ENCODE measurements at regions of chr2 and their contacts with region 1.

Region 1: DNA sequence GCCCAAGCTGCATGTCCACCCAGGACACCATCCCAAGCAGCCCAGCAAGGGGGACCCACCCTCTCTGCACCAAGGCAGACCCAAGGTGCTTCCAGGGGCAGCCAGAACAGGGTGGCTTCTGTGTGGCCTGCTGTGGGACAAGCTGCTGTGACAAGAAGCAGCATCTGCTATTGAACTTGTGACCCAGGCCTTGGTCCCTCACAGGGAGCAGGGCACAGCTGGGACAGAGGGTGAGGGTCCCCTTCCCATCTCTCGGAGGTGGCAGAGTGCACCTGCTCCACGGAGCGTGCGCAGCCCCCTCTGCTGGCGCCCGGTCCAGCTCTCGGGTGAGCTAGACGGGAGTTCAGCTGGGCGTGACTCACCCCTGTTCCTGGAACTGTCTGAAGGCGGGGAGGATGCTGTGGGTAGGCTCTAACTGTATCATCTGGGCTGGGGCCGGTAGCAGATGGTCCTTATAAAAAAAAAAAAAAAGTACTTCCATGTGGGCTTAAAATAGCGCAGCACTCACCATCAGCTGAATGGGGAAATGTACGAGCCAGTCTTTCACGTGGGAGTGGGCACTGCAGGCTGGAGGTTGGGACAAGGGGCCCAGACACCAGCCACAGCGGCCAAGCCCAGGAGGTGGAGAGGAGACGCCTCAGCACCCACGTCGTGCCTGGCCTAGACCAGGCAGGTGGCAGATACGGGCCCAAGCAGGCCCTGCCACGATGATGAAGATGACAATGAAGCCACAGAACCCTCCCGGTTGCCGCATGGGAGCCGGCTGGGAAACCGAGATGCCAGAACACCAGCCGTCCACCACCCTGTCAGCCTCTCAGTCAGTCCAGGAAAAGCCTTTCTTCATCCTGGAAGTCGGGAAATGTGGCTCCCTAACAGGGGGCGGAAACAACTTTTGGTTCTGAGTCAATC is 136.8 kb upstream of the ID2 start:
- DNase-seq: peak; percentile 97
- H3K4me3 Mint-ChIP-seq: peak overlapping the region; percentile 10
- H3K27ac Mint-ChIP-seq: peak overlapping the region; percentile 97
- H3K4me1 Mint-ChIP-seq: peaks cover 67% of the 10 kb centered on the region
- H3K27me3 Mint-ChIP-seq: no peaks in the 10 kb centered on the region

Region 2: GRCh38 chr2:7567646-7568045 is 977.4 kb before region 1 on chr2:
- CTCF ChIA-PET with region 1: no interaction called
- intact Hi-C with region 1: loop called (anchors 5 kb)
- DNase-seq: peak; percentile 82
- H3K4me3 Mint-ChIP-seq: peak overlapping the region; percentile 36
- H3K27ac Mint-ChIP-seq: peak overlapping the region; percentile 82
- H3K4me1 Mint-ChIP-seq: peaks cover 58% of the 10 kb centered on the region
- H3K27me3 Mint-ChIP-seq: no peaks in the 10 kb centered on the region

Region 3: GRCh38 chr2:7984693-7985353 is 560.2 kb before region 1 on chr2:
- CTCF ChIA-PET with region 1: no interaction called
- intact Hi-C with region 1: loop called (anchors 5 kb)
- DNase-seq: peak; percentile 22
- H3K4me3 Mint-ChIP-seq: peak overlapping the region; percentile 8
- H3K27ac Mint-ChIP-seq: peak overlapping the region; percentile 62
- H3K4me1 Mint-ChIP-seq: peaks cover 20% of the 10 kb centered on the region
- H3K27me3 Mint-ChIP-seq: peaks cover 4% of the 10 kb centered on the region

Region 4: DNA sequence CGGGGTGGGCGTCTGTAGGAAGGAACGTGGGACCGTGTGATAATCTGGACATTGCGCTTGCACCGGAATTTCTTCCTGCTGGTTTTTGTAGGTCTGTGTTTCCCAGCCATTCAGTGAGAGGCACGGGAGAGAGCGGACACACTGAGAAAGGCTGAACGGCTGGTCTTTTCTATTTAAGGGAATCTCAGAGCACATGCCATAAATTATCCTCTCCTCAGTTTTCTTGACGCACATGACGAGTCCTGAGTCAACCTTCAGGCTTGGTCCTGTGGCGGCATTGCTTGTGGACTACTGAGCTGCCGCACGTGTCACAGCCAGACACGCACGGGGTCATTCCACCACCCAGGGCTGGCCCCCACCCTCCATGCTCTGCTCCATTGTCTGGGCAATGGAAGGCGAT is 382.5 kb before region 1 on chr2:
- CTCF ChIA-PET with region 1: no interaction called
- intact Hi-C with region 1: no loop called
- DNase-seq: no peak
- H3K4me3 Mint-ChIP-seq: no peak overlapping the region
- H3K27ac Mint-ChIP-seq: no peak overlapping the region
- H3K4me1 Mint-ChIP-seq: no peaks in the 10 kb centered on the region
- H3K27me3 Mint-ChIP-seq: no peaks in the 10 kb centered on the region

Region 5: GRCh38 chr2:8337321-8337720 is 207.7 kb before region 1 on chr2:
- CTCF ChIA-PET with region 1: no interaction called
- intact Hi-C with region 1: loop called (anchors 2 kb)
- DNase-seq: peak; percentile 56
- H3K4me3 Mint-ChIP-seq: no peak overlapping the region
- H3K27ac Mint-ChIP-seq: peak overlapping the region; percentile 14
- H3K4me1 Mint-ChIP-seq: peaks cover 15% of the 10 kb centered on the region
- H3K27me3 Mint-ChIP-seq: no peaks in the 10 kb centered on the region

Region 6: GRCh38 chr2:8514796-8515758 is 30.0 kb before region 1 on chr2:
- CTCF ChIA-PET with region 1: interaction called, 23 read pairs
- intact Hi-C with region 1: loop called (anchors 1 kb)
- DNase-seq: peak; percentile 84
- H3K4me3 Mint-ChIP-seq: peak overlapping the region; percentile 42
- H3K27ac Mint-ChIP-seq: peak overlapping the region; percentile 96
- H3K4me1 Mint-ChIP-seq: peaks cover 46% of the 10 kb centered on the region
- H3K27me3 Mint-ChIP-seq: no peaks in the 10 kb centered on the region

Region 7: DNA sequence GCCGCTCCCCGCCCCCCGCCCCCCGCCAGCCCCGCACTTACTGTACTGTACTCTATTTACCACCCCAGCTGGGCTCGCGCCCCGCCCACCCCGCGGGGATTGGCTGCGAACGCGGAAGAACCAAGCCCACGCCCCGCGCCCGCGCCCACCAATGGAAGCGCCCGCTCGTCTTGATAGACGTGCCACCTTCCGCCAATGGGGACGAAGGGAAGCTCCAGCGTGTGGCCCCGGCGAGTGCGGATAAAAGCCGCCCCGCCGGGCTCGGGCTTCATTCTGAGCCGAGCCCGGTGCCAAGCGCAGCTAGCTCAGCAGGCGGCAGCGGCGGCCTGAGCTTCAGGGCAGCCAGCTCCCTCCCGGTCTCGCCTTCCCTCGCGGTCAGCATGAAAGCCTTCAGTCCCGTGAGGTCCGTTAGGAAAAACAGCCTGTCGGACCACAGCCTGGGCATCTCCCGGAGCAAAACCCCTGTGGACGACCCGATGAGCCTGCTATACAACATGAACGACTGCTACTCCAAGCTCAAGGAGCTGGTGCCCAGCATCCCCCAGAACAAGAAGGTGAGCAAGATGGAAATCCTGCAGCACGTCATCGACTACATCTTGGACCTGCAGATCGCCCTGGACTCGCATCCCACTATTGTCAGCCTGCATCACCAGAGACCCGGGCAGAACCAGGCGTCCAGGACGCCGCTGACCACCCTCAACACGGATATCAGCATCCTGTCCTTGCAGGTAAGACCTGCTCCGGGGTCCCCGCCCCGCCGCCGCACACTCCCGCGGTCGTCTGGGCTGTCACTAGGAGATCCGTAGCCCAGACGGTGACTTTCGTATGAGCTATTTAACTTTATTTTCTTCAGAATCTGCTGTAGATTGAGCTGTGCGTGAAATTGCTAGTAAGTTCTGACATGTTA is 137.0 kb after region 1 on chr2 and contains the start of gene ID2:
- CTCF ChIA-PET with region 1: interaction called, 15 read pairs
- intact Hi-C with region 1: loop called (anchors 1 kb)
- DNase-seq: peak; percentile 98
- H3K4me3 Mint-ChIP-seq: peak within 1 kb of the TSS; percentile 96
- H3K27ac Mint-ChIP-seq: peak within 1 kb of the TSS; percentile 91
- H3K4me1 Mint-ChIP-seq: peaks cover 31% of the 10 kb centered on the region
- H3K27me3 Mint-ChIP-seq: peaks cover 18% of the 10 kb centered on the region
- total RNA-seq, gene ID2: 73.9 to 81.9 TPM

Region 8: DNA sequence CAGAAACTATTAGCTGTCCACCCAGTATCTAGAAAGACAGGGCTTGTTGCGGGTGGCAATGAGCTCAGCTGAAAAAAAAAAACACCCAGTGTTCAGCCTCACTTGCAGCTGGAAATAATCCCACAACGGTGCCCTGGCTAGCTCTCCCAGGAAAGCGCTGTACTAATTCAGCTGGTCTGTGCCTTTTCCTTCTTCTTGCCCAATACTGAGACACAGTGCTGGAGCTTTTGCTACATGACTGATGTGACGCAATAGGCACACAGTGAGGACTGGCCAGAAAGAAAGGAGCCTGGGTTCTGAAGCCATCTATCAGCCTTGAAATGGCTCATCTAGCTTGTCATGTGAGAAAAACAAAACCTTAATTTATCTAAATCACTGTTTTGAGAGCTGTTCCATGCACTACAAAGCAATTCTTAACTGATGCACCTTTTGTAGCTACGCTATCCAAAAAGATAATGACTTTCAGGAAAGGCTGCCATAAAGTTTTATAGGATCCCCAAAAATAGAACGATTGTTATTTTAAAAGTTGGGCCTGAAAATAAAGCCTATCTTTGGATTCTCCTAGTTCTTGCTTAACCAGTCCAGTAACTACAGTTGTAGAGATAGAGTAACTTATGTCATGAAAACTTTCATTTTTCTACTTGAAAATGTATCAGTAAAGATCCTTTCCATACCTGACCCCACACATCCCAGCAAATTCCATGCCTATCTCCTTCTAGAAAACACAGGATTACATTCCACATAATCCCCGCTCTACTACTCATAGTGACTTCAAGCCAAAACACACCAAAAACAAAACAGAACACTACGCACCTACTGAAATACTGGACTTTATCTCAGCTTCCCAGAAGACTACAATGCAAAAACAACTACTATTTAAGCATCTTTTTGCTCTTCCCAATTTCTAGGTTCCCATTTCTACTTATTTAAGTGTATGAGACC is 276.5 kb after region 1 on chr2:
- CTCF ChIA-PET with region 1: no interaction called
- intact Hi-C with region 1: no loop called
- DNase-seq: no peak
- H3K4me3 Mint-ChIP-seq: no peak overlapping the region
- H3K27ac Mint-ChIP-seq: no peak overlapping the region
- H3K4me1 Mint-ChIP-seq: no peaks in the 10 kb centered on the region
- H3K27me3 Mint-ChIP-seq: no peaks in the 10 kb centered on the region